Activated T-helper 1 cell treated with anti-CD3 and anti-CD28 coated beads, Interleukin-12 subunit alpha, Interleukin-12 subunit beta, Interleukin-2, Interleukin-4 antibody, amounts not matched to agents 30 ng/mL and 10 ng/mL and 1 ng/mL, durations not matched to agents 14 hours and 24 hours and 36 hours (primary cell): ENCODE measurements at regions of chr22 and their contacts with region 1.

Region 1: DNA sequence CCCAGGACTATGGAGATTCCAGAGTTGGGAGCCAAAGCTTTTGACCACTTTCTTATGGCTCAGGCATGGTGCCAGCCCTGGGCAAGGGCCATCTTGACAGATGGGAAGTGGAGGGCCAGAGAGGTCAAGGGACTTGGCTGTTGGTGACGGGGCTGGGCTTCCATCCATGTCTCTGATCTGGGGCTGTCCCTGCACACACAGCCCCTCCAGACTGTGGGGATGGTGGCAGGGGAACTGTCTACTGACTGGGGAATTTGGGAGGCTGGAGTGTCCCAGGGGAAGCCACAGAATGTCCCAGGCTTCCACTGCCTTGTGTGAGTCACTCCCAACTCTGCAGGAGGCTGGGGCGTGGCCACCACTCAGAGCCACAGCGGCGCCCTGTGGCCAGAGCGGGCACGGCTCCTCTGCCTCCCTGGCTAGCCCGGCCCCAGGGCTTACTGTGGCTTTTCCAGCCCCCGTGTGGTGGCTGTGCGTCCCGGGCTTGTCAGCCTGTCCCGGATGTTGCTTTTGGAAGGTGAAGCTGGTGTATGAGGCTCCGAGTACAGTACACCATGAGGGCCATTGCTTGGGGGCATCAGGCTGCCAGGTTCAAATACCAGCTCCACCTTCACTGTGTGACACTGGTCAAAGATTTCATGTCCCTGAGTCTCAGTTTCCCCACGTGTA is 19.6 kb downstream of the C22orf23 start:
- DNase-seq: peak; percentile 78
- H3K4me3 Mint-ChIP-seq: no peak overlapping the region
- H3K27ac Mint-ChIP-seq: peak overlapping the region; percentile 34
- H3K4me1 Mint-ChIP-seq: peaks cover 11% of the 10 kb centered on the region
- H3K27me3 Mint-ChIP-seq: no peaks in the 10 kb centered on the region

Region 2: DNA sequence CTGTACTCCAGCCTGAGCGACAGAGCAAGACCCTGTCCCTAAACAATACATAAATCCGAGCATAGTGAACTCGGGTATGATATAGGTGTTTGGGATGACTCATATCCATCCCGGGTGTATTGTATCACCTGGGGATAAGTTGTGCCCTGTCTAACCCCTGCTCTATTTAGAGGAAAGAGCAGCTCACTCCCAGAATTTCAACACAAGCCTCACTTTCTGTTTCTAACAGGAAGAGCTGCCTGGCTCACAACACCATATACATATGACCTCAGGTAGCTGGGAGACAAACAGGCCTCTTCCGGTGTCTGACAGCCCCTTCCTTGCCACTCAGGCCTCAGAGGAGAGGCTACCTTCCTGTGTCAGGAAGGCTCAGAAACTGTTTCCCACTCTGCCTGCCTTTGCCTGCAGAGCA is 37.7 kb before region 1 on chr22:
- intact Hi-C with region 1: loop called (anchors 5 kb)
- DNase-seq: peak; percentile 52
- H3K4me3 Mint-ChIP-seq: peak overlapping the region; percentile 30
- H3K27ac Mint-ChIP-seq: peak overlapping the region; percentile 89
- H3K4me1 Mint-ChIP-seq: peaks cover 25% of the 10 kb centered on the region
- H3K27me3 Mint-ChIP-seq: no peaks in the 10 kb centered on the region

Region 3: GRCh38 chr22:37905534-37906363 is 28.1 kb before region 1 on chr22 and contains the start of gene MICALL1:
- intact Hi-C with region 1: loop called (anchors 1 kb)
- DNase-seq: peak; percentile 67
- H3K4me3 Mint-ChIP-seq: peak within 1 kb of the TSS; percentile 85
- H3K27ac Mint-ChIP-seq: peak within 1 kb of the TSS; percentile 89
- H3K4me1 Mint-ChIP-seq: peaks cover 26% of the 10 kb centered on the region
- H3K27me3 Mint-ChIP-seq: peaks cover 4% of the 10 kb centered on the region
- total RNA-seq, gene MICALL1: 27.3 and 31.1 TPM in 2 replicates

Region 4: GRCh38 chr22:37953437-37954179 is 19.8 kb after region 1 on chr22 and contains the starts of genes C22orf23 and POLR2F:
- intact Hi-C with region 1: loop called (anchors 1 kb)
- DNase-seq: peak; percentile 94
- H3K4me3 Mint-ChIP-seq: peak within 1 kb of the TSS; percentile 99
- H3K27ac Mint-ChIP-seq: peak within 1 kb of the TSS; percentile 92
- H3K4me1 Mint-ChIP-seq: peaks cover 26% of the 10 kb centered on the region
- H3K27me3 Mint-ChIP-seq: peaks cover 7% of the 10 kb centered on the region
- total RNA-seq, gene C22orf23: 0.61 TPM in 1 of 2 replicates, not detected in the other
- total RNA-seq, gene POLR2F: 102 and 120 TPM in 2 replicates